Calu3 (cell line): ENCODE measurements at regions of chr2 and their contacts with region 1.

Region 1: DNA sequence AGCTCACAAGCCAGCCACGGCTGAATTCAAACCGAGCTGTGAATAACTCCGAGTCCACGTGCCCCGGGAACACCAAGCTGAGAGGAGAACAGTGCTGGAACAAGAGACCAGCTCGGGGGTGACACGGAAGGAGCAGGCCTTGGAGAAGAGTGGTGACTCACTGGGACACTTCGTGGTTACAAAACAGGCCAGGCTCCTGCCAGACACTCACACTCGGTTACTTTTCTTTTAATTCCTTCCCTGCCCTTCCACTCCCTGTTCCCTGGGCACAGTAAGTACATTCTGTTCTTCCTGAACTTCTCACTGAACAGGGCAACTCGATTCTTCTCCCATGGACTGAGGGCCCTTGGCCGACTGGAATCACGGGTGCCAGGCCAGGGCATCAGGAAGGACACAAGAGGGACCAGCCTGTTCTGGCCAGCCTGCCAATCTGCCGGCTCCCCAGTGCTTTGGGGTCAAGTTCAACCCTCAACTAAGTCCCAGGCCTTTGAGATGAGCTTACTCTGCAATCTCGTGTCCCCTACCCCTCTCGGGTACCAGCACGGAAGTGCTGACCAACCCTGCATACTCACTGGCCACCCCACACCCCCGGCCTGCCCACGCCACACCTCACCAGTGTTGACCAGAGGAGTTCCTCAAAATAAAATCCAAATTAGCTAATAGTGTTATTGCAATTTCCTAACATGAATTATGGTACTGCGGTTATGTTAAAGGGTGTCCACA is 87.5 kb downstream of the TFCP2L1 start:
- DNase-seq: peak; percentile 76
- H3K4me3 Mint-ChIP-seq: peak overlapping the region; percentile 33
- H3K27ac Mint-ChIP-seq: peak overlapping the region; percentile 97
- H3K4me1 Mint-ChIP-seq: peaks cover 33% of the 10 kb centered on the region
- H3K27me3 Mint-ChIP-seq: no peaks in the 10 kb centered on the region
- CTCF ChIP-seq: no peak

Region 2: GRCh38 chr2:121777699-121778058 is 580.1 kb after region 1 on chr2:
- CTCF ChIA-PET with region 1: no interaction called
- intact Hi-C with region 1: loop called (anchors 5 kb)
- DNase-seq: peak; percentile 45
- H3K4me3 Mint-ChIP-seq: peak overlapping the region; percentile 1
- H3K27ac Mint-ChIP-seq: no peak overlapping the region
- H3K4me1 Mint-ChIP-seq: peaks cover 37% of the 10 kb centered on the region
- H3K27me3 Mint-ChIP-seq: no peaks in the 10 kb centered on the region
- CTCF ChIP-seq: no peak